CD4-positive, alpha-beta T cell (primary cell): ENCODE measurements at regions of chr9 and their contacts with region 1.

Region 1: DNA sequence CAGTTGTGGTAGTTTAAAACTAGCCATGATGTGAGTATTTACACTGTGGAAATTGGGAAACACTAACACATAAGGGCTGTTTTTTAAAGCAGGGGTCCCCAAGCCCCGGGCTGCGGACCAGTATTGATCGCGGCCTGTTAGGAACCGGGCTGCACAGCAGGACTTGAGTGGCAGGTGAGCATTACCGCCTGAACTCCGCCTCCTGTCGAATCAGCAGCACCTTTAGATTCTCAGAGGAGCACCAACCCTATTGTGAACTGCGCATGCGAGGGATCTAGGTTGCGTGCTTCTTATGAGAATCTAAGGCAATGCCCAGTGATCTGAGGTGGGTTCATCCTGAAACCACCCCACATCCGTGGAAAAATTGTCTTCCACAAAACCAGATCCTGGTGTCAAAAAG is 127.8 kb downstream of the PCSK5 start:
- DNase-seq: peak in 5 of 14 experiments; percentile 4 to 48 (median 21)
- ATAC-seq: peak; percentile 69
- H3K4me3 ChIP-seq: peak overlapping the region; percentile 6
- H3K4me3 Mint-ChIP-seq: peak overlapping the region; percentile 38
- H3K27ac ChIP-seq: no peak overlapping the region
- H3K27ac Mint-ChIP-seq: peak overlapping the region; percentile 93
- H3K4me1 ChIP-seq: peaks cover 23% of the 10 kb centered on the region
- H3K4me1 Mint-ChIP-seq: peaks cover 90% of the 10 kb centered on the region
- H3K27me3 ChIP-seq: no peaks in the 10 kb centered on the region
- H3K27me3 Mint-ChIP-seq: no peaks in the 10 kb centered on the region
- CTCF ChIP-seq: no peak

Region 2: GRCh38 chr9:76297721-76298239 is 279.5 kb after region 1 on chr9:
- CTCF ChIA-PET with region 1: no interaction called
- POLR2A ChIA-PET with region 1: no interaction called
- intact Hi-C with region 1: loop called (anchors 5 to 10 kb)
- DNase-seq: no peak
- ATAC-seq: no peak
- H3K4me3 ChIP-seq: no peak overlapping the region
- H3K4me3 Mint-ChIP-seq: no peak overlapping the region
- H3K27ac ChIP-seq: no peak overlapping the region
- H3K27ac Mint-ChIP-seq: no peak overlapping the region
- H3K4me1 ChIP-seq: no peaks in the 10 kb centered on the region
- H3K4me1 Mint-ChIP-seq: no peaks in the 10 kb centered on the region
- H3K27me3 ChIP-seq: no peaks in the 10 kb centered on the region
- H3K27me3 Mint-ChIP-seq: no peaks in the 10 kb centered on the region
- CTCF ChIP-seq: no peak